CD8-positive, alpha-beta T cell (primary cell): ENCODE measurements at regions of chr17 and their contacts with region 1.

Region 1: GRCh38 chr17:29124117-29124924 is 55.9 kb downstream of the MYO18A start:
- DNase-seq: peak in 8 of 9 experiments; percentile 12 to 76 (median 44)
- ATAC-seq: peak; percentile 97
- H3K4me3 ChIP-seq: no peak overlapping the region
- H3K4me3 Mint-ChIP-seq: no peak overlapping the region
- H3K27ac ChIP-seq: no peak overlapping the region
- H3K27ac Mint-ChIP-seq: no peak overlapping the region
- H3K4me1 ChIP-seq: no peaks in the 10 kb centered on the region
- H3K4me1 Mint-ChIP-seq: peaks cover 5% of the 10 kb centered on the region
- H3K27me3 ChIP-seq: no peaks in the 10 kb centered on the region
- H3K27me3 Mint-ChIP-seq: no peaks in the 10 kb centered on the region
- CTCF ChIP-seq: peak; percentile 67

Region 2: DNA sequence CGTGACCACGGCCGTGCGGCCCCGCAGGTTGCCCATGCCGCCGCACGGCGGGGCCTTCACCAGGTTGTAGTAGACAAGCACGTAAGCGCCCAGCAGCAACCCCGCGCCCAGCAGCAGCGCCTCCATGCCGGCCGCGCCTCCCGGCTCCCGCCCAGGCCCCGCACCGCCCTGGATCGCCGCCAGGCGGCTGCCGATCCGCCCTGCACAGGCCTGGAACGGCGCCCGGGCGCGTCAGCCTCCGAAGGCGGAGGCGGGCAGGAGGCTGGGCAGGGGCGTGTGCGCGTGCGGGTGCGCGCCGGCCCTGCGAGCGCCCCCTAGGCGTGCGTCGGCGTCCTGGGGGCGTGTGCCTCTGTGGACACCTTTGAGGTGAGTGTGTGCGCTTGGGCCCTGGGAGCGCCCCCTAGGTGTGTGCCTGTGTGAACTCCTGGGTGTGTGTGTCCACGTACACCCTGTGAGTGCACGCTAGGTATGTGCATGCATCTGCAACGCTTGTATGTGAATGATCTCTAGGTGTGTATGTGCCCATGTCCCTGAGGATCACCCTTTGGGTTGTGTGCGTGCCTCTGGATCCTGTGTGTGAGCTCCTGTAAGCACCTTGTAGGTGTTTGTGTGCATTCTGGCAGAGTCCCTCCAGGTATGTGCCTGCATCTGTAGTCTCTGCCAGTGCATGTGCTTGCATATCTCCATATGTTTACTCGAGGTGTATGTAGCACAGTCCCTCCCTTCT is 221.3 kb before region 1 on chr17 and contains the start of gene DHRS13:
- CTCF ChIA-PET with region 1: no interaction called
- POLR2A ChIA-PET with region 1: no interaction called
- intact Hi-C with region 1: no loop called
- DNase-seq: peak; percentile 87 to 98 (median 95)
- ATAC-seq: peak; percentile 93
- H3K4me3 ChIP-seq: peak within 1 kb of the TSS; percentile 71 to 72
- H3K4me3 Mint-ChIP-seq: peak within 1 kb of the TSS; percentile 93
- H3K27ac ChIP-seq: peak within 1 kb of the TSS; percentile 61 to 62
- H3K27ac Mint-ChIP-seq: peak within 1 kb of the TSS; percentile 90
- H3K4me1 ChIP-seq: peaks cover 31% of the 10 kb centered on the region
- H3K4me1 Mint-ChIP-seq: peaks cover 33% of the 10 kb centered on the region
- H3K27me3 ChIP-seq: no peaks in the 10 kb centered on the region
- H3K27me3 Mint-ChIP-seq: no peaks in the 10 kb centered on the region
- CTCF ChIP-seq: peak; percentile 100
- total RNA-seq, gene DHRS13: 27.3 to 30.9 TPM

Region 3: GRCh38 chr17:28967221-28968140 is 156.8 kb before region 1 on chr17:
- CTCF ChIA-PET with region 1: interaction called, 368 read pairs
- POLR2A ChIA-PET with region 1: no interaction called
- intact Hi-C with region 1: no loop called
- DNase-seq: no peak
- ATAC-seq: no peak
- H3K4me3 ChIP-seq: no peak overlapping the region
- H3K4me3 Mint-ChIP-seq: no peak overlapping the region
- H3K27ac ChIP-seq: no peak overlapping the region
- H3K27ac Mint-ChIP-seq: no peak overlapping the region
- H3K4me1 ChIP-seq: no peaks in the 10 kb centered on the region
- H3K4me1 Mint-ChIP-seq: peaks cover 4% of the 10 kb centered on the region
- H3K27me3 ChIP-seq: peaks cover 0 to 5% of the 10 kb centered on the region in 2 experiments
- H3K27me3 Mint-ChIP-seq: peaks cover 9% of the 10 kb centered on the region
- CTCF ChIP-seq: no peak

Region 4: GRCh38 chr17:29140051-29140621 is 15.8 kb after region 1 on chr17:
- CTCF ChIA-PET with region 1: interaction called, 80 read pairs
- POLR2A ChIA-PET with region 1: interaction called, 7 read pairs
- intact Hi-C with region 1: loop called (anchors 1 kb)
- DNase-seq: peak; percentile 50 to 91 (median 85)
- ATAC-seq: peak; percentile 72
- H3K4me3 ChIP-seq: peak overlapping the region; percentile 69 to 73
- H3K4me3 Mint-ChIP-seq: peak overlapping the region; percentile 93
- H3K27ac ChIP-seq: peak overlapping the region; percentile 54 to 84
- H3K27ac Mint-ChIP-seq: peak overlapping the region; percentile 100
- H3K4me1 ChIP-seq: peaks cover 50% of the 10 kb centered on the region
- H3K4me1 Mint-ChIP-seq: peaks cover 68% of the 10 kb centered on the region
- H3K27me3 ChIP-seq: no peaks in the 10 kb centered on the region
- H3K27me3 Mint-ChIP-seq: no peaks in the 10 kb centered on the region
- CTCF ChIP-seq: no peak

Region 5: DNA sequence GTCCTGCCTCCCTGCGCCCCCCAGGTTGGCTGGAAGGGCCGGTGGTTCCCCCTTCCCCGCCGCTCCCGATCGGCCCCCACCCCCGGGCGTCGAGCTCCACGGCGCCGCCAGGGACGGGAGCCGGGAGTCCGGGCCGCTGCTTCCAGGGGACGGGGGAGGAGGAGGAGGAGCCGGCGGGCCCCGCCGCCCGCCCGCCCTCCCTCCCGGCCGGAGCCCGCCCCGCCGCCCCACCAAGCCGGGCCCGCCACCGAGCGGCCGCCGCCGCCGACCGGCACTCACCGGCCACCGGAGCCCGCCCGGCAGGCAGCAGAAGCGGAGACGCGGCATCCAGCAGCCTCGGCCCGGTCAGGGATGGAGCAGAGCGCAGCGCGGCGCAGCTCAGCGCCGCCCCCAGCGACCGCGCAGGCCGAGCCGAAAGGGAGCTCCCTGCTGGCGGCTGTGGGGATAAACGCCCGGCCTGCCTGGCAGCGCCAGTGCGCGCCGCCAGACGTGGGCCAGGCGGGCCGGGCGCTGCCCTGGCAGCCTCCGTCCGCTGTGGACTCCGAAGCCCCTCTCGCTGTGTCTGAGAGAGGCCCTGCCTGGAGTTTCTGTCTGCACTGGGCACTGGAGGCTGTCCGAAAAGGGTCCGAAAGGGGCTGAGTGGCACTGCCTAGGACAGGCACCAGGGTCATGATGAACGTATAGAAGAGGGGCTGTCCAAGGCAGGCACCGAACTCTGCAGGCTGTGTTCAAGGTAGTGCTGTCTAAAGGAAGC is 55.9 kb after region 1 on chr17 and contains the start of gene MYO18A:
- CTCF ChIA-PET with region 1: interaction called, 113 read pairs
- POLR2A ChIA-PET with region 1: interaction called, 3 read pairs
- intact Hi-C with region 1: loop called (anchors 1 kb)
- DNase-seq: peak; percentile 64 to 89 (median 78)
- ATAC-seq: peak; percentile 94
- H3K4me3 ChIP-seq: peak within 1 kb of the TSS; percentile 20 to 26
- H3K4me3 Mint-ChIP-seq: peak within 1 kb of the TSS; percentile 68
- H3K27ac ChIP-seq: peak within 1 kb of the TSS in 1 of 2 experiments; percentile 5
- H3K27ac Mint-ChIP-seq: no peak within 1 kb of the TSS
- H3K4me1 ChIP-seq: peaks cover 22% of the 10 kb centered on the region
- H3K4me1 Mint-ChIP-seq: peaks cover 20% of the 10 kb centered on the region
- H3K27me3 ChIP-seq: no peaks in the 10 kb centered on the region
- H3K27me3 Mint-ChIP-seq: no peaks in the 10 kb centered on the region
- CTCF ChIP-seq: peak; percentile 86
- total RNA-seq, gene MYO18A: 48.5 to 52.9 TPM

Region 6: GRCh38 chr17:29219378-29220047 is 95.2 kb after region 1 on chr17:
- CTCF ChIA-PET with region 1: interaction called, 46 read pairs
- POLR2A ChIA-PET with region 1: no interaction called
- intact Hi-C with region 1: loop called in 1 of 2 experiments (anchors 1 kb)
- DNase-seq: peak; percentile 35 to 81 (median 75)
- ATAC-seq: peak; percentile 86
- H3K4me3 ChIP-seq: no peak overlapping the region
- H3K4me3 Mint-ChIP-seq: no peak overlapping the region
- H3K27ac ChIP-seq: no peak overlapping the region
- H3K27ac Mint-ChIP-seq: no peak overlapping the region
- H3K4me1 ChIP-seq: no peaks in the 10 kb centered on the region
- H3K4me1 Mint-ChIP-seq: peaks cover 5% of the 10 kb centered on the region
- H3K27me3 ChIP-seq: no peaks in the 10 kb centered on the region
- H3K27me3 Mint-ChIP-seq: no peaks in the 10 kb centered on the region
- CTCF ChIP-seq: peak; percentile 78